Gastrocnemius medialis (tissue), 4 donors: ENCODE measurements at regions of chr5 and their contacts with region 1.

Region 1: DNA sequence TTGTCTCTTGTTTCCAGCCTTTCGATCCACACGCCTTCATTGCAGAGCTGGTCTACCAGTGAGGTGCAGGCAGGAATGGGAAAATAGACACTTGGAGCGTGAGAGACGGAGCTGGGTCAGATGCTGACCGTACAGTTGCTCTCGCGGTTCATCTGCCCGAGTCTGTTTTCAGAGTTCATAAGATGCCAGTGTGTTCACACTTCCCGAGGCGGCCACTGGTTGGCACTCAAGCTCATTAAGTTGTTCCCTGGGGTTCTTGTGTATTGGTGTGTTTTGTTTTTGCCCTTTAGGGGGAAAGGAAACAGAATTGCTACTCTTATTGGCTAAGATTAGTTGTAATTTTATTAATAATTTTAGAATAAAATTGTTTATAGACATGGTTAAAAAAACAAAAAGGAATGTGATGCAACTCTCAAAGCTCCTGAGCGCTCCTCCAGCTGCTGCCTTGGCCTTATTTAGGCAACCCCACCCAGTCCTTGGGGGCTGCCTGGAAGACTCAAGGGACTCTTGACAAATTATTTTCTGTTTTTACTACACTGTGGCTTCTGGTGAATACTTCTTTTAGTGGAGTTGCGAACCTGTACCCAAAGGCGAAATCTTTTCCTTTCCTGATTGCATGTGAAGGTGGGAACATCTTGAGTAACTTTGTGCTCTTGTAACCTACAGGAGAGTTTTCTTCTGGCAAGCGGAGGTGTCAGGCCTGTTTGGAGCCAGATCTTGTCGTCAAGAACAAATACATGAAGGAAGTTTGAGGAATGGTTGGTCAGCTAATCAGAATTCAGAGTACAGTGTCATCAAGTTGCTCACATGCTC is 146.1 kb downstream of the MAST4 start:
- DNase-seq: no peak
- ATAC-seq: no peak
- H3K4me3 ChIP-seq: no peak overlapping the region
- H3K27ac ChIP-seq: peak overlapping the region in 1 of 4 donors; percentile 26
- H3K4me1 ChIP-seq: peaks cover 0 to 7% of the 10 kb centered on the region in 2 donors
- H3K27me3 ChIP-seq: no peaks in the 10 kb centered on the region
- CTCF ChIP-seq: peak in 1 of 5 experiments; percentile 16
- POLR2A ChIP-seq: no peak

Region 2: GRCh38 chr5:66595756-66596635 is 146.3 kb before region 1 on chr5 and contains the start of gene MAST4:
- in situ Hi-C with region 1: no loop called
- intact Hi-C with region 1: loop called (anchors 10 kb)
- DNase-seq: peak; percentile 62 to 68
- ATAC-seq: peak; percentile 81 to 85
- H3K4me3 ChIP-seq: peak within 1 kb of the TSS; percentile 60 to 81 (median 70)
- H3K27ac ChIP-seq: peak within 1 kb of the TSS in 1 of 4 donors; percentile 64
- H3K4me1 ChIP-seq: peaks cover 0 to 12% of the 10 kb centered on the region in 2 donors
- H3K27me3 ChIP-seq: peaks cover 18 to 28% (median 27%) of the 10 kb centered on the region in 3 donors
- CTCF ChIP-seq: no peak
- POLR2A ChIP-seq: peak; percentile 30 to 55
- total RNA-seq, gene MAST4: 24.1 to 42.0 (median 38.5) TPM

Region 3: GRCh38 chr5:67552773-67553172 is 810.5 kb after region 1 on chr5:
- in situ Hi-C with region 1: no loop called
- intact Hi-C with region 1: no loop called
- DNase-seq: peak in 1 of 2 donors; percentile 25
- ATAC-seq: peak in 1 of 2 donors; percentile 68
- H3K4me3 ChIP-seq: no peak overlapping the region
- H3K27ac ChIP-seq: peak overlapping the region in 1 of 4 donors; percentile 28
- H3K4me1 ChIP-seq: peaks cover 8 to 14% of the 10 kb centered on the region in 2 donors
- H3K27me3 ChIP-seq: no peaks in the 10 kb centered on the region
- CTCF ChIP-seq: no peak
- POLR2A ChIP-seq: no peak